ENCODE measurements at regions of chr6 and their contacts with region 1.

Region 1: DNA sequence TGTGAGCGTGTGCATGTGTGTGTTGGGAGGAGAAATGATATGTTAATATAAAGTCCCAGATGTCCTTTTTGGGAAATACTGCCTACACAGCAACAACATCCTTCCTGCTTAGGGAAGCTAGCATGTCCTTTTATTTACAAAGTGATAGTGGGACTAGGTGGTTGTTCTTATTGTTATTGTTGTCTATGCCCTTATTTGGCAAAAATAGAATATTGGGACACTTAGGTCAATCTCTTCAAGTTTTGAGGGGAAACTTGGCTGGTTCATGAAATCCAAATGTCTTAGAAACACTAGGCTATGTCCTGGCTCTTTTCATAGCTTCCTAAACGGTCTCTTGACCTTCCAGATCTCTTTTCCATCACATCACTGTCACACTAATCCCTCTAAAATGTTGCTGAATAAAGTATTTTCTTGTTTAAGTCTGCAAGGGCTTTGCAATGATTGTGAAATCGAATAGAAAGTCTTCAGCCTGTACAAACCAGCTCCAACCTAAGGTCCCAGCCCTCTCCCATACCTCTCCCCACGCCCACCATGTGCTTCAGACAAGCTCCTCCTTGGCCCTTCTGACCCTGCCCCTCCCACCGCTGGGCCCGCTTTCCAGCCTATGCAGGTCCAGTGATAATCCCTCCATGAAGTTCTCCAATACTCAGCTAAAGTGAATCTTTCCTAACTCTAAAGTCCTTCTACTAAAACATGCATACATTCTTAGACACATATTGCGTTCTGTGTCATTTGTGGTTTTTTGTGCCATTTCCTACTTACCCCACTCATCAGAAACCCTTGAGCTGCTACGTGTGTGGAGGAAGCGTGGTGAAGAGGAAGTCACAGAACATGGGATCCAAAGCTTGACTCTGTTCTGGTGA is 205.1 kb downstream of the LY86 start:
- DNase-seq: peak; percentile 18
- ATAC-seq: peak; percentile 25
- H3K4me3 Mint-ChIP-seq: no peak overlapping the region
- H3K27ac Mint-ChIP-seq: no peak overlapping the region
- H3K4me1 Mint-ChIP-seq: peaks cover 17% of the 10 kb centered on the region
- H3K27me3 Mint-ChIP-seq: peaks cover 4% of the 10 kb centered on the region

Region 2: DNA sequence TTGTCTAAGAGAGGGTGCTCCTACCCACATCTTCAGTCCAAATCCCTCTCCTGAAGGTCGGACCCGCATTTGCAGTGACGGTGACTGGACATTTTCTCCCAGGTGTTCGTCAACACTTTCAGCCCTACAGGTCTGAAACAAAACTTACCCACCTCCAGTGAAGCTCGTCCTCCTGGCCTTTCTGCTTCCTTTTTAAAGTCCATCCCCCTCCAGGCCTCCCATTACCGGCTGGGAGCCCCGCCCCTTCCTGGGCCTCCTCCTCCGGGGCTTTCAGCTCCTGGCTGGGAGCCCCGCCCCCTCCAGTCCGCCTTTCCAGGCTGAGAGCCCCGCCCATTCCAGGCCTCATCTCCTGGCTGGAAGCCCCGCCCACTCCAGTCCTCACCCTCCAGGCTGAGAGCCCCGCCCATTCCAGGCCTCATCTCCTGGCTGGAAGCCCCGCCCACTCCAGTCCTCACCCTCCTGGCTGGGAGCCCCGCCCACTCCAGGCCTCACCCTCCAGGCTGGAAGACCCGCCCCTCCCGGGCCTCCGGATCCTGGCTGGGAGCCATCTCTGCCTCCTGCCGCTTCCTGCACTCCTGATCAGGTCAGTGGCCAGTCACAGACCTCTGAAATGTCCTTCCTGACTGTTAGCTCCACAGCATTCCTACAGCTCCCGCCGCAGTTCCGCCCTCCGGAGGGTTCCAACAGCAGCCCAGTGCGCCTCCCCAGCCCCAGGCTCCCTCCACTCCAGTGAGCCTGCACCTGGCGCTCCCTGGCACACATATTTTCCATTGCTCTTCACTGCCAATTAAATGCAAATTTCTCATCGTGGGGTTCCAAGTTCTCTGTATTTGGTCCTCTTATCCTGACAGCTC is 106.6 kb before region 1 on chr6:
- CTCF ChIA-PET with region 1: no interaction called
- POLR2A ChIA-PET with region 1: no interaction called
- intact Hi-C with region 1: loop called in 1 of 2 experiments (anchors 10 kb)
- DNase-seq: peak; percentile 45
- ATAC-seq: no peak
- H3K4me3 Mint-ChIP-seq: no peak overlapping the region
- H3K27ac Mint-ChIP-seq: no peak overlapping the region
- H3K4me1 Mint-ChIP-seq: peaks cover 30% of the 10 kb centered on the region
- H3K27me3 Mint-ChIP-seq: no peaks in the 10 kb centered on the region

Region 3: GRCh38 chr6:7489376-7489775 is 695.8 kb after region 1 on chr6:
- CTCF ChIA-PET with region 1: no interaction called
- POLR2A ChIA-PET with region 1: no interaction called
- intact Hi-C with region 1: no loop called
- DNase-seq: no peak
- ATAC-seq: no peak
- H3K4me3 Mint-ChIP-seq: no peak overlapping the region
- H3K27ac Mint-ChIP-seq: no peak overlapping the region
- H3K4me1 Mint-ChIP-seq: no peaks in the 10 kb centered on the region
- H3K27me3 Mint-ChIP-seq: peaks cover 17% of the 10 kb centered on the region

Measured in activated CD4-positive, alpha-beta T cell treated with anti-CD3 and anti-CD28 coated beads for 36 hours (primary cell).